ENCODE measurements at regions of chr17 and their contacts with region 1.

Region 1: DNA sequence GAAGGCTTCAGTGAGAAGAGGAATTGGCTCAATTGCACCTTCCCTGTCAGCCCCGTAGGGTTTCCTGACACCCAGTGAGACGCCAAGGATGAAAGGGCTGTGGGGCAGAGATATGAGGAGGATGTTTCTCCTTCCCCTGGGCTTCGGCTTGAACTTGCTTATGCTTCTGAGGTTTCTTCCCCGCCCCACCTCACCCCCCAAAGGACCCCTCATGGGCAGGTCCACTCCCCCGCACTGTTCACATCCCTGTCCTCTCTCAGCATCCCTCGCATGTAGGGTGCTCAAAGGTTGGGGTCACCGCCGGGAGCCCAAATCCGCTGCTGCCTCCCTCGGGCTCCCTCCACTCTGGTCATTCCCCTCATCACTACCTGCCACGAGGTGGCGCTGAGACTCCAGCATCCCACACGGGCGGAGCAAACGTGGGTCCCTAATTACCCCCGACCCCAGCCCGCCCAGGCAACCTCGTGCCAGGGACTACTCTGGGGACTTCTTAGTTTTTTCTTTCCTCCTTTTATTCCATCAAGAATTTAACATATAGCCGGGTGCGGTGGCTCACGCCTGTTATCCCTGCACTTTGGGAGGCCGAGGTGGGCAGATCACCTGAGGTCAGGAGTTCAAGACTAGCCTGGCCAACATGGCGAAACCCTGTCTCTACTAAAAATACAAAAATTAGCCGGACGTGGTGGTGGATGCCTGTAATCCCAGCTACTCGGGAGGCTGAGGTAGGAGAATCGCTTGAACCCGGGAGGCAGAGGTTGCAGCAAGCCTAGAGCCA is 3.3 kb upstream of the TRARG1 start:
- DNase-seq: peak in 1 of 2 donors; percentile 61
- H3K4me3 ChIP-seq: peak overlapping the region in 1 of 3 donors; percentile 2
- H3K27ac ChIP-seq: no peak overlapping the region
- H3K4me1 ChIP-seq: peaks cover 0 to 2% of the 10 kb centered on the region in 2 donors
- H3K27me3 ChIP-seq: peaks cover 0 to 15% of the 10 kb centered on the region in 2 donors
- CTCF ChIP-seq: peak; percentile 12 to 69 (median 67)
- POLR2A ChIP-seq: no peak

Region 2: DNA sequence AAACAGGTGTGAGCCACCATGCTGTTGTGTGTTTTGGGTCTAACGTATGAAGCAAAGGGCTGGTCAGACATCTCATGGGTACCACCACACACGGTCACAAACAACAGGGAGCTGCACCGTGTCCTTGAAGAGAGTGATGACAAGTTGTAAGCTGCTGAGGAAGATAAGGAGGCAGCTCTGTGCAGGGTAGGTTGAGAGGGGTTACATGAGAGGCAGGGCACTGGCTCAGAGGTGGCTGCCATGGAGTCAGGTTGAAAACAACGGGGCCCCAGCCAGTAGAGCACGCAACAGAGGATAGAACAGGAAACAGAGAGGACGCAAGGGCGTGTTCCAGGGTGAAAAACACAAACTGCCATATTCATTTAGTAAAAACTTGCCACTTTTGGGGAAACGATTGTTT is 55.6 kb after region 1 on chr17:
- intact Hi-C with region 1: loop called (anchors 10 kb)
- DNase-seq: no peak
- H3K4me3 ChIP-seq: no peak overlapping the region
- H3K27ac ChIP-seq: no peak overlapping the region
- H3K4me1 ChIP-seq: no peaks in the 10 kb centered on the region
- H3K27me3 ChIP-seq: no peaks in the 10 kb centered on the region
- CTCF ChIP-seq: no peak
- POLR2A ChIP-seq: no peak

Region 3: GRCh38 chr17:1503699-1504098 is 227.6 kb after region 1 on chr17:
- intact Hi-C with region 1: no loop called
- DNase-seq: no peak
- H3K4me3 ChIP-seq: no peak overlapping the region
- H3K27ac ChIP-seq: no peak overlapping the region
- H3K4me1 ChIP-seq: no peaks in the 10 kb centered on the region
- H3K27me3 ChIP-seq: no peaks in the 10 kb centered on the region
- CTCF ChIP-seq: no peak
- POLR2A ChIP-seq: no peak

Region 4: GRCh38 chr17:1516388-1517161 is 240.4 kb after region 1 on chr17 and contains the start of gene INPP5K:
- intact Hi-C with region 1: loop called (anchors 10 kb)
- DNase-seq: peak; percentile 98
- H3K4me3 ChIP-seq: peak within 1 kb of the TSS; percentile 92 to 95 (median 93)
- H3K27ac ChIP-seq: peak within 1 kb of the TSS; percentile 91 to 97
- H3K4me1 ChIP-seq: peaks cover 0 to 13% of the 10 kb centered on the region in 2 donors
- H3K27me3 ChIP-seq: no peaks in the 10 kb centered on the region
- CTCF ChIP-seq: peak; percentile 17 to 26 (median 20)
- POLR2A ChIP-seq: no peak
- total RNA-seq, gene INPP5K: 75.2 to 177 (median 88.8) TPM

Region 5: DNA sequence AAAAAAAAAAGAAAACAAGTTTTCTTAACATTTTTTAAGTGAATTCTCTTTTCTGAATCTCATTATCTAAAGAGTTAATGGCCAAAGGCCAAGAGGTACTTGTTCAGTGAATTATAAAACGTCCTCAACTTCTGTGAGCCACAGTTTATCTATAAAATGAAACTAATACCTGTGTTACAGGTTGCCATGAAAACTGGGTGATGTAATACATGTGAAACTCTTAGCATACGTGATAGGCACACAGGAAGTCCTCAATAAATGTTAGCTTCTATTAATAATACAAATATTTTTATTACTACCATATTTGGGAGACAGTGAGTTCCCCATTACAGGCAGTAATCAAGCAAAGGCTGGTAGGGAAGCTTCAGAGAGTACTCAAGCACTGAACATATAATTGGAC is 253.7 kb after region 1 on chr17:
- intact Hi-C with region 1: no loop called
- DNase-seq: no peak
- H3K4me3 ChIP-seq: no peak overlapping the region
- H3K27ac ChIP-seq: no peak overlapping the region
- H3K4me1 ChIP-seq: no peaks in the 10 kb centered on the region
- H3K27me3 ChIP-seq: no peaks in the 10 kb centered on the region
- CTCF ChIP-seq: no peak
- POLR2A ChIP-seq: no peak

Measured in breast epithelium (tissue), 4 donors.